H1 (cell line): ENCODE measurements at regions of chr16 and their contacts with region 1.

Region 1: DNA sequence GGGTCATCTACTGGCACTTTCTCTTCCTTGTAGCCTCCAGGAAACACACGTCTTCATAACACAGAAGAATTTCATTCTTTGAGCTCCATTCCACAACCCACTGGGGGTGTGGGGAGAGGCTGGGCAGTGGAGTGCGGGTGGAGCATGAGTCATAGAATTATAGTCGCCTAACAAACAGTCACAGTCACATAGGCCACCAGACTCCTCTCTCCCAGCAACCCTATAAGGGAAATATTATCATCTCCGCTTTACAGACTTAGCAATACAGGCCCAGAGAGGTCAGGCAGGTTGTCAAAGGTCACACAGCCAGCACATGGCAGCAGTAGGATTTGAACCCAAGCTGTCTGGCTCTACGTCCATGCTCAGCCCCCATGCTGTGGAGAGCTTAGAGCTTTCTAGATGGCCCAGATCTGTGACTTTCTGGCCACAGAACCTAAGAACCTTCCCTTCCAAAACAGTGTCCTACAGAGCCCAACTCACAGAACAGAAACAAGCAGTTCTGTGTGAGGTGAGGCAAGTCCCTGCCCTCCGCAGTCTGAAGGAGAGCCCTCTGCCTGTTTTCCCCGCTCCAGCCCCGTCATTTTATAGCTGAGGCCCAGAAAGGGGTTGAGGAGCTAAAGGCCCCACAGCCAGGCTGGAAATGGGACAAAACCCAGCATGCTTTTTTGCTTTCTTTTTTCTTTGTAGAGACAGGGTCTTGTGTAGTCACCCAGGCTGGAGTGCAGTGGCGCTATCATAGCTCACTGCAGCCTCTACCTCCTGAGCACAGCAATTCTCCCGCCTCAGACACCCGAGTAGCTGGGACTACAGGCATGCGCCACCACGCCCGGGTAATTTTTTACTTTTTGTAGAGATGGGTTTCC is 10.8 kb upstream of the LITAF start:
- DNase-seq: no peak
- H3K4me3 ChIP-seq: no peak overlapping the region
- H3K27ac ChIP-seq: 0 out of 2 replicates have a peak overlapping the region, but pooled peaks have one; percentile 5
- H3K4me1 ChIP-seq: peaks cover 11 to 30% (median 18%) of the 10 kb centered on the region in 4 experiments
- H3K27me3 ChIP-seq: no peaks in the 10 kb centered on the region
- CTCF ChIP-seq: no peak
- EP300 ChIP-seq: no peak
- POLR2A ChIP-seq: no peak
- RAD21 ChIP-seq: no peak

Region 2: DNA sequence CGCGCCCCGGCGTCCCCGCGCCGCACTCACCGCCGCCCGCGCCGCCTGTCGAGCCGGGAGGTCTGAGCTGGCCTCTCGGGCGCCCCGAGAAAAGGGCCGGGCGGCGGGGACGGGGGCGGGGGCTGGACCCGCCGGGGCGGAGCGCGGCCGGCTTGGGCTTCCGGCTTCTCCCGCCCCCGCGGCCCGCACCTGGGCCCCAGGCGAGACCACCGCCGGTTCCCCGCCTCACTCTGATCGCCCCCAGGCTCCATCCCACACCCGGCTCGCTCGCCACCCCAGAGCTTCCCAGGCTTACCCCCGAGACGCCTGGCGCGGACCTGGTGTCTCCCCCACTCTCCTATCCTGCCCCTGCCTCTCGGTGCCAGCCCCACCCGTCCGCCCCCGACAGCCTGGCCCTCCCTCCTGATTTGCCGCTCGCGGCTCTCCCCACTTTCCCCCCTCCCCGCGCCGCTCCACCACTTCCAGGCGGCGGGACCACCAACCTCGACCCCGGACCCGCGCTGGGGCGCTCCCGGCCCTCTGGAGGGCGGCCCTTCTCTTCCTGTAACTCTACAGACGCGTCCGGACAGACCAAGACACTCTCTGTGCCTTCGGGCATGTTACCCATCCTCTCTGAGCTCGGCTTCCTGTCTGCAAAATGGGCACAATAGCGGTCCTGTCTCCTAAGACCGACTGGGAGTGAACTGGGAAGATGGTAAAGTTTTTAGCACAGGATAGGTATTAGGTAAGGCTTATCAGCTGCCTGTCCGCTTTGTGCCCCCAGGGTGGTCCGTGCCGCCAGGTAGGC is 10.4 kb before region 1 on chr16 and contains the start of gene LITAF:
- CTCF ChIA-PET with region 1: interaction called, 15 read pairs
- POLR2A ChIA-PET with region 1: interaction called, 24 read pairs
- DNase-seq: peak; percentile 9 to 79
- H3K4me3 ChIP-seq: peak within 1 kb of the TSS; percentile 49 to 87 (median 63)
- H3K27ac ChIP-seq: no peak within 1 kb of the TSS; the same call in 1 of the 2 replicates
- H3K4me1 ChIP-seq: peaks cover 12 to 29% (median 25%) of the 10 kb centered on the region in 4 experiments
- H3K27me3 ChIP-seq: peaks cover 4 to 21% (median 13%) of the 10 kb centered on the region in 4 experiments
- CTCF ChIP-seq: peak in 1 of 3 experiments; percentile 22; a peak in 1 of 4 replicates
- EP300 ChIP-seq: no peak
- POLR2A ChIP-seq: no peak
- RAD21 ChIP-seq: peak; percentile 46 to 49; a peak in 3 of 4 replicates
- total RNA-seq, gene LITAF: 160 and 165 TPM in 2 replicates